Heart right ventricle (tissue), 16 donors: ENCODE measurements at regions of chr15 and their contacts with region 1.

Region 1: GRCh38 chr15:67240235-67241131 is 14.0 kb downstream of the AAGAB start:
- DNase-seq: no peak
- ATAC-seq: no peak
- H3K4me3 ChIP-seq: no peak overlapping the region
- H3K27ac ChIP-seq: no peak overlapping the region
- H3K4me1 ChIP-seq: peaks cover 0 to 37% (median 0%) of the 10 kb centered on the region in 9 donors
- H3K27me3 ChIP-seq: no peaks in the 10 kb centered on the region
- CTCF ChIP-seq: peak in 5 of 9 donors; percentile 24 to 45 (median 41)

Region 2: GRCh38 chr15:67175643-67176071 is 64.8 kb before region 1 on chr15:
- intact Hi-C with region 1: loop called in 1 of 10 experiments (anchors 5 kb)
- DNase-seq: no peak
- ATAC-seq: peak in 4 of 8 donors; percentile 10 to 31 (median 18)
- H3K4me3 ChIP-seq: no peak overlapping the region
- H3K27ac ChIP-seq: peak overlapping the region in 2 of 10 donors; percentile 17 to 65
- H3K4me1 ChIP-seq: peaks cover 0 to 50% (median 33%) of the 10 kb centered on the region in 9 donors
- H3K27me3 ChIP-seq: no peaks in the 10 kb centered on the region
- CTCF ChIP-seq: no peak

Region 3: DNA sequence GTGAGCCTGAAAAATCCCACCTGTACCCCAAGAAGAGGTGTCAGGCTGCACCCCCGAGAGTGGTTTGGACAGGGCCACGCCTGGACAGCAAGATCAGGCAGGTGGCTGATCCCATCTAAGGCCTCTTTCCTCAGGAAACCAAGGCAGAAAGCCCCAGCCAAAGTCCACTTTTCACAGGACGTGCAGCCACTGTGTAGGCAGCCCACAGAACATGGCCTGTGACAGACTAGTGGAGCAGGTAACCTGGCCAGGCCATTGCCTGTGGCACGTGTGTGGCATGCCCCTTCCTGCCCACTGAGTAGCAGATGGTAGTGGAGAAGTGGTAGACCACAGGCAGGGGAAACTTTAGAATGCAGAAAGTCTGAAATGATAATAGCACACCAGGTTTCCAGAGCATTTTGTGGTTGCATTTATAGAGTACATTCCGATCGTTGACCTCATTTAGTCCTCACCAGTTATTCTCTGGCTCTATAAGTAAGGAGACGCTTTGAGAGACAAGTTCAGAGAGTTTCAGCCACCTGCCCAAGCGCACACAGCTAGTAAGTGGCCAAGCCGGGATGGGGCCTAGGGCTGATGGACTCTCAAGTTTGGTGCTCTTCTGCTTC is 54.8 kb before region 1 on chr15:
- intact Hi-C with region 1: no loop called
- DNase-seq: no peak
- ATAC-seq: peak in 1 of 8 donors; percentile 0
- H3K4me3 ChIP-seq: no peak overlapping the region
- H3K27ac ChIP-seq: peak overlapping the region; percentile 79 to 95 (median 86)
- H3K4me1 ChIP-seq: peaks cover 35 to 66% (median 58%) of the 10 kb centered on the region in 9 donors
- H3K27me3 ChIP-seq: no peaks in the 10 kb centered on the region
- CTCF ChIP-seq: no peak